ENCODE measurements at regions of chr16 and their contacts with region 1.

Region 1: DNA sequence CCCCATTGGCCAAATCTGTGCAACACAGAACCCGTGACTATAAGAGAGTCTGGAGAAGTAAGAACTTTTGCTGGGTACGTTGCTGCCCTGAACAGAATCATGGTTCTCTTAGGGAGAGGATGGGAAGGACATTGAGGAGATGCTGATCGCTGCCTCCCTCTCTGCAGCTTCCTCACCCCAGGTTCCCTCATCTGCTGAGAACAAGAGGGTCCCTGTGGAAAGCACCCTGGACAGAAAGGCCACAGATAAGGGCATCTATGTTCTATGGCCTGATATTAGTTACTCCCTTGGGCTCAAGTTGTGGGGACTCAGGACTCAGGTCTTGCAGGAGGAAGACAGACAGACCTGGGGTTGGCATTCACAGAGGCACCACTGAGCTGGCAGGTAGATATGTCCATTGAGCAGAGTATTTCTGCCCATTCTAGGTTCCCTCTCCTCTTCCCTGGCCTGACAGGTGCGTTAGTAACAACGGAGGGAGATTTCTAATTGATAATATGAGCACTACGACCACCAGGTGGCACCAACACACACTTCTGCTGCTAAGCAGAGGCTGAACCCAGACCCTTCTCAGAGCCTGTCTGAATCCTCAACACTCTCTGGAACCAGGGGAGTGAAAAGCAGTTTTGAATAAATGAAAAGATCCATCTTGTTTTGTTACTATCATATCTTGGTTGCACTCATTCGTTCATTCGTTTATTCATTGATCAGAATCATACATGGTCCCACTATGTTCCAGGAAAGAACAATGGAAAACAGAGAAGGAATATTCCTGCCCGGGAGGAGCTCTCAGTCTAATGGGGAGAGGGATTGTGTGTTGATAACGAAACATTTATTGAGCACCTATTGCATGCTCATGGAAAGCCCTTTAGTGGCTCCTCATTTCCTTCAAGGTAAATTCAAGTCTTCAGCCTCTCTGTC is 56.4 kb downstream of the SLC6A2 start:
- DNase-seq: peak; percentile 49
- H3K4me3 ChIP-seq: no peak overlapping the region
- H3K27ac ChIP-seq: no peak overlapping the region
- H3K4me1 ChIP-seq: no peaks in the 10 kb centered on the region
- H3K27me3 ChIP-seq: no peaks in the 10 kb centered on the region
- CTCF ChIP-seq: peak; percentile 39

Region 2: DNA sequence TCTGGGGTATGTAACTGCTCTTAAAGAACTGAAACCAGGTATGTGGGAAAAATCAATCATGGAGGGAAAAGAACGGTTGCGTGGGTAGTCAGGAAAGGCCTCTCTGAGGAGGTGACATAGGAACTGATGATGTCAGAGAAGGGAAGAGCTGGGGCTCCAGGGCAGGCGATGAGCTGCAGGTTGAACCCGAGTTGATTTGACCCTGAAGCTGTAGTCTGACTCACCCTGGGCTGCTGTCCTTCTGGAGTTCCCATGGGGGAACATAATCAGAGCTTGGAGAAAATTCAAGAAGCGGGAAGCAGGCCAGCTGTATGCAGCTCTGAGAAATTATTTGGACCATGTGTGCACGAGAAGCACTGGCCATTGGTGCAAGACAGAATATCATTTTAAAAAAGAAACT is 39.7 kb before region 1 on chr16:
- intact Hi-C with region 1: no loop called
- DNase-seq: no peak
- H3K4me3 ChIP-seq: no peak overlapping the region
- H3K27ac ChIP-seq: no peak overlapping the region
- H3K4me1 ChIP-seq: no peaks in the 10 kb centered on the region
- H3K27me3 ChIP-seq: no peaks in the 10 kb centered on the region
- CTCF ChIP-seq: no peak

Region 3: GRCh38 chr16:55842369-55843104 is 130.3 kb after region 1 on chr16:
- intact Hi-C with region 1: loop called (anchors 2 kb)
- DNase-seq: no peak
- H3K4me3 ChIP-seq: no peak overlapping the region
- H3K27ac ChIP-seq: no peak overlapping the region
- H3K4me1 ChIP-seq: no peaks in the 10 kb centered on the region
- H3K27me3 ChIP-seq: no peaks in the 10 kb centered on the region
- CTCF ChIP-seq: peak; percentile 54

Measured in colonic mucosa (tissue), 4 donors.